Sciatic nerve (tissue), 2 donors: ENCODE measurements at regions of chr16 and their contacts with region 1.

Region 1: DNA sequence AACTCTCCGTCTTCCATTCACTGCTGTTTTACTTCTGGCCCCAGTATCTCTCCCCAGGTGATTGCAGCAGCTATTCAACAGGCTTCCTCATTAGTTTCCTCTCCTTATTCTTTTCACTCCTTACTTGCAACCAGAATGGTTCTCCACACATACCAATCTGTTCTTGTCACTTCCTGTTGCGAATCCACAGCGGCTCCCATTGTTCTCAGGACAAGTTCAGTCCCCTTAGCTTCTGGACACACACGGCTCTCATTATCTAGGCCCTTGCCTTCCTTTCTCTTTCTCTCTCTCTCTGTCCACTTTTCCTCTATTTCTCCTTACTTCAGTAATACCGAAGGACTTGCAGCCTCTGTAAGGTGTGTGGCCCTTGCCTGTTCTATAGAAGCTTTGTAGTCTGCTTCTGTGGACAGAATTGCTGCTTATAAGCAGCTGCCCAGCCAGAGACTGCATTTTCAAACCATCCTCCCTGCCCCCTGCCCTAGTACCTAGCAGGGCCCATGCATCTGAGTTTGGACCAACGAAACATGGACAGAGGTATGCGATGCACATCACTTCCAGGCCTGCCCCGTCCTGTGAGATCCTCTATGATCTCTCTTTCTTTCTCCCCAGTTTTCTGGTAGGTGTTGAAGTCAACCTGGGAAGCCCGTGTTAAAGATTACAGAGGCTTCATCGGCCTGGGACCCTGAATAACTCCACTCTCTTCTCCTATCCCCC is 45.7 kb downstream of the VAT1L start:
- DNase-seq: no peak
- ATAC-seq: no peak

Region 2: GRCh38 chr16:77564791-77565390 is 269.2 kb before region 1 on chr16:
- intact Hi-C with region 1: no loop called
- DNase-seq: no peak
- ATAC-seq: no peak

Region 3: DNA sequence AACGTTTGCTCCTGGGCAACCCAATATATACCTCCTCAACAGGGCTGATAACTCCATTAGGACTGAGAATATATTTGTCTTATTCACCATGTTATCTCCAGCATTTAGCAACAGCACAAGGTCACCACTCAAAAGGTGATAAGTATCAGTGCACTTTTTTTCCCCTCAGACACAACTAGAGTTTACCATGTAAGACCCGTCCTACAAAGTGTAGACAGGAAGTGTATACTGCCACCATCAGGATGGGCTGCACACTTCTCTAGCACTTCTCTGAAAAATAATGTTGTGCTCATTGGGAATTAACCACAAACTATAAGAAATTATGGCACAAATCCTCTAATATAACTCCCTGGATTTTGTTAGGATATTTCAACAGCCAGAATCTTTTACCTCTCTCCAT is 51.4 kb before region 1 on chr16:
- intact Hi-C with region 1: loop called (anchors 5 kb)
- DNase-seq: no peak
- ATAC-seq: no peak

Region 4: DNA sequence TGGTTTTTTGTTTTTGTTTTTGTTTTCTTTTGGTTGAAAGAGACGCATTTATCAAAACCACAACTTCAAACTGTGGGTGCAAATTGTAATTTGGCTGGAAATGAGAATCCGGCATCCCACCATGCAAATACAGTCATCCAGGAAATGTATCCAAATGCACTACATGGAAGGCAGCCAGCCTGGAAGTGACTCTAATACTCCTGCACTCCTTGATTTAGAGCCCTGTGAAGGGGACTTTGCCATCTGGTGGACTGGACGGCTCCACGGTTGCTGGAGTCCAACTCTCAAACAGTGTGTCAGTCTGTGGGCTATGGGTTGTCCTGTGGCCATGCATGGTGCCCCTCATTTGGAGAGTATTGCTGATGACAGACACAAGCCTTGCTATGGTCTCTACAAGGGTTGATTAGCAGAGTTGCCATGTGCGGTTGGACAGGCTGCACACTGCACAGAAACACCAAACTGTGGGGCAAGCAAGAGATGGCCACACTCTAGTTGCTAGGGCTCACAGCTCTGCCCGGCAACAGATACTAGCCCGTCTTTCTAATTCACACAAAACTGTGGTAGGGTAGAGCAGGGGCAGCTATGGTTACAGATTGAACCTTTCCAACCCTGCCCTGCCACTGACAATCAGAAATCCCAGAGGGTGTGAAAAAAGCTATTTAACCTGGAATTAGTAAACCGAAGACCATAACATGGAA is 16.7 kb after region 1 on chr16:
- intact Hi-C with region 1: no loop called
- DNase-seq: no peak
- ATAC-seq: no peak